ENCODE measurements at regions of chr16 and their contacts with region 1.

Region 1: GRCh38 chr16:69754469-69755310 is at the start of gene NOB1:
- DNase-seq: peak; percentile 93 to 98
- H3K4me3 ChIP-seq: peak within 1 kb of the TSS; percentile 80
- CTCF ChIP-seq: peak in 2 of 3 donors; percentile 49 to 99
- POLR2A ChIP-seq: peak in 1 of 2 donors; percentile 9
- total RNA-seq, gene NOB1: 33.8 to 78.0 (median 51.0) TPM

Region 2: GRCh38 chr16:69396187-69397061 is 358.3 kb before region 1 on chr16:
- intact Hi-C with region 1: loop called (anchors 5 kb)
- DNase-seq: peak; percentile 76 to 92
- H3K4me3 ChIP-seq: no peak overlapping the region
- CTCF ChIP-seq: peak in 1 of 3 donors; percentile 43
- POLR2A ChIP-seq: no peak

Region 3: GRCh38 chr16:69709456-69710084 is 45.1 kb before region 1 on chr16:
- intact Hi-C with region 1: loop called (anchors 5 kb)
- DNase-seq: peak in 1 of 2 donors; percentile 31
- H3K4me3 ChIP-seq: no peak overlapping the region
- CTCF ChIP-seq: no peak
- POLR2A ChIP-seq: no peak

Region 4: GRCh38 chr16:69823831-69824563 is 69.3 kb after region 1 on chr16:
- intact Hi-C with region 1: no loop called
- DNase-seq: no peak
- H3K4me3 ChIP-seq: no peak overlapping the region
- CTCF ChIP-seq: no peak
- POLR2A ChIP-seq: no peak

Measured in lower leg skin (tissue), 4 donors.